ENCODE measurements at regions of chr3 and their contacts with region 1.

Region 1: DNA sequence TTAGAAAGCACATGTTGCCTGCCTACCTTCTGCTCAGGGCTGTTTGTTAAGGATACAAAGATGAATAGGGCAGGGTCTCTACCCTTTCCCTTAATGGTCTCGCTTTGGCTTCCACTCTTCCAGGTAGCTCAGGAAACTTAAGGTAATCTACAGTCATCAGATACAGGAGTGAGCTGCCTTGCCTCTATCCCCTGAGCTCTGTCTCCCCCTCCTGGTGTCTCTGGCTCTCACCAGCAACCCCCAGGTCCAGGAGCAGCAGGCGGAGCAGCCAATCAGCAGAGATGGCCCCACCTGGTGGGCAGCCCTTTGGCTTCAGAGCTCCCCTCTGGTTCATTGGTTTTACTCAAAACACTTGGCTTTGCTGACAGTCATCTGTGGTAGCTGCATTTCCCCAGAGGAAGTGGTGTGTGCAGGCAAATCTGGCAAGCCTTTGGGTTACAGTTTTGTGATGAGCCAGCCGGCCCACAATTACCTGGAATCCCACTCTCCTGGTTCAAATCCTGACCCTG is 8.5 kb upstream of the CX3CR1 start:
- DNase-seq: peak; percentile 80
- H3K4me3 Mint-ChIP-seq: no peak overlapping the region
- H3K27ac Mint-ChIP-seq: no peak overlapping the region
- H3K4me1 Mint-ChIP-seq: peaks cover 7% of the 10 kb centered on the region
- H3K27me3 Mint-ChIP-seq: no peaks in the 10 kb centered on the region
- CTCF ChIP-seq: peak; percentile 94

Region 2: GRCh38 chr3:38805765-38806386 is 482.5 kb before region 1 on chr3:
- CTCF ChIA-PET with region 1: no interaction called
- POLR2A ChIA-PET with region 1: no interaction called
- intact Hi-C with region 1: no loop called
- DNase-seq: peak; percentile 90
- H3K4me3 Mint-ChIP-seq: no peak overlapping the region
- H3K27ac Mint-ChIP-seq: no peak overlapping the region
- H3K4me1 Mint-ChIP-seq: no peaks in the 10 kb centered on the region
- H3K27me3 Mint-ChIP-seq: peaks cover 33% of the 10 kb centered on the region
- CTCF ChIP-seq: no peak

Region 3: DNA sequence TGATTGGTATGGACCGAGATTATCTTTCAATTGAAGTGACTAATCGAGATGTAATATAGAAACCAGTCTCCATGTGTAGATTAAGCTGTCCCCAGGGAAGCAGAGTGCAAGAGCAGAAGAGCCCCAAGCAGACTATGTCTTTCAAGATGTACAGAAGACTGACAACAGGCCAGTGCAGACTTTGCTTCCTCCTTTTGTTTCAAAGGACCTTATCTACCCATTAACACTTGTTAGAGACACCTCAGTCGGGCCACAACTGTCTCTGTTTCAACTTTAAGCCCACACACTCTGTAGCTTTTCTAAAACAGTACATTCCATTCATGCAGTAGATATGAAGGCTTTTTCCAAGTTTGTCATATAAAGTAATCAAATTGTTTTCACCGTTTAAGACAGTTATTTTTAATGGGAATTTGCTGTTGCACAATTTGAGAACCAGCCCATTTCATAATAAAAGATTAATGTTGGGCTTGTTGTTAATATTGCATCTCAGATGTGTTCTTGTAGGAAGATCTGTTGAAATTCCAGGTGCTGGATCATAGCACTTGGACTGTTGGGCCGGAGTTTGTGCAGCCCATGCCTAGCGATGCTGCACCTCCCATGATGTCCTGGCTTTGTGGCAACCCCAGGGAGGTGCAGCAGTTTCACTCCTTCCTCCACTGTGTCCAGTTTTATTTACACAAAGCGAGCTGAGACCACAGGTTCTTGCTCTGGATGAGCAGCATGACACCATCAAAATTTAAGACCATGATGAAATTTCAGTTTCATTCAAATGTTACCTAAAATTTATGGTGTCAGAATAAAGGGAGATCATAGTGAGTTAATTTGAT is 193.3 kb before region 1 on chr3:
- CTCF ChIA-PET with region 1: interaction called, 17 read pairs
- POLR2A ChIA-PET with region 1: no interaction called
- intact Hi-C with region 1: no loop called
- DNase-seq: no peak
- H3K4me3 Mint-ChIP-seq: no peak overlapping the region
- H3K27ac Mint-ChIP-seq: no peak overlapping the region
- H3K4me1 Mint-ChIP-seq: no peaks in the 10 kb centered on the region
- H3K27me3 Mint-ChIP-seq: no peaks in the 10 kb centered on the region
- CTCF ChIP-seq: no peak

Region 4: DNA sequence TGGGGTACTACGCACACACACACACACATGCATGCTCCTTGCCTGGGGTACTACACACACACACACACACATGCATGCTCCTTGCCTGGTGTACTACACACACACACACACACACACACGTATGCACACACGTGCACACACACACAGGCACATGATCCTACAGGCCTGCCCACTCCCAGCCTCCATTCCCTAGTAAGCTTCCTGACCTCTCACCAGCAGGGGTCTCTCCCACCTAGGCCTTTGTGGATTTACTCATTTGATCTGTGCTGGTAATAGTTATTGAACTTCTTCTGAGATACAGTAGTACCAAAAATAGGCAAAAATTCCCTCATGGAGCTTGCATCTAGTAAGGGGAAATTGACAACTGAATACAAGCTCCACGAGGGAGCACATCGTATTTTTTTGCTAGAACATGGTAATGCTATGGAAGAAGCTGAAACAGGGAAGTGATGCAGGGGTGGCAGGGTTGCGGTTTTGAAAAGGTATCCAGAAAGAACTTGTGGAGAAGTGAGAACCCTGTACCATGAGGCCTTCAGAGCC is 161.8 kb before region 1 on chr3:
- CTCF ChIA-PET with region 1: interaction called, 187 read pairs
- POLR2A ChIA-PET with region 1: interaction called, 10 read pairs
- intact Hi-C with region 1: loop called (anchors 1 kb)
- DNase-seq: peak; percentile 72
- H3K4me3 Mint-ChIP-seq: no peak overlapping the region
- H3K27ac Mint-ChIP-seq: no peak overlapping the region
- H3K4me1 Mint-ChIP-seq: peaks cover 12% of the 10 kb centered on the region
- H3K27me3 Mint-ChIP-seq: no peaks in the 10 kb centered on the region
- CTCF ChIP-seq: peak; percentile 51

Region 5: GRCh38 chr3:39180546-39181346 is 107.6 kb before region 1 on chr3:
- CTCF ChIA-PET with region 1: interaction called, 477 read pairs
- POLR2A ChIA-PET with region 1: no interaction called
- intact Hi-C with region 1: no loop called
- DNase-seq: peak; percentile 87
- H3K4me3 Mint-ChIP-seq: peak overlapping the region; percentile 73
- H3K27ac Mint-ChIP-seq: peak overlapping the region; percentile 40
- H3K4me1 Mint-ChIP-seq: peaks cover 34% of the 10 kb centered on the region
- H3K27me3 Mint-ChIP-seq: no peaks in the 10 kb centered on the region
- CTCF ChIP-seq: no peak

Region 6: GRCh38 chr3:39234705-39235104 is 53.6 kb before region 1 on chr3:
- CTCF ChIA-PET with region 1: interaction called, 11 read pairs
- POLR2A ChIA-PET with region 1: no interaction called
- intact Hi-C with region 1: no loop called
- DNase-seq: no peak
- H3K4me3 Mint-ChIP-seq: no peak overlapping the region
- H3K27ac Mint-ChIP-seq: no peak overlapping the region
- H3K4me1 Mint-ChIP-seq: no peaks in the 10 kb centered on the region
- H3K27me3 Mint-ChIP-seq: peaks cover 83% of the 10 kb centered on the region
- CTCF ChIP-seq: no peak

Region 7: GRCh38 chr3:39273119-39273518 is 15.2 kb before region 1 on chr3:
- CTCF ChIA-PET with region 1: interaction called, 70 read pairs
- POLR2A ChIA-PET with region 1: no interaction called
- intact Hi-C with region 1: no loop called
- DNase-seq: no peak
- H3K4me3 Mint-ChIP-seq: no peak overlapping the region
- H3K27ac Mint-ChIP-seq: no peak overlapping the region
- H3K4me1 Mint-ChIP-seq: no peaks in the 10 kb centered on the region
- H3K27me3 Mint-ChIP-seq: peaks cover 15% of the 10 kb centered on the region
- CTCF ChIP-seq: no peak

Region 8: DNA sequence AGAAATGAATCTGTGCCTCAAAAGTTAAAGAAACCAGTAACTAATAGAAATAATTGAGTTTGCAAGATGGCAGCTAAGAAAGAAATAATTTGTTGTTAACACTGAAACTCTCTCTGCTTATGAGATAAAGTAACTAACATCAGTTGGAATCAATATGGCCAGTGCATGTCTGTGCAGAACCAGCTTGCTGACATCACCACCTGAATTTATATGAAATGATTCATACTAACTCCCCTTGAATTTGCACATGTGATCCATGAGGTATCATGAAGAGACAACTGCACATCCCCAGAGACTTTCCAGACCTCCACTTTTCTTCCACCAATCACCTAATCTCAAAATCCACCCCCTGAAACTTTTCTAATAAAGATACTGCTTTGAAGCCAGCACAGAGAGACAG is 84.5 kb after region 1 on chr3:
- CTCF ChIA-PET with region 1: interaction called, 83 read pairs
- POLR2A ChIA-PET with region 1: no interaction called
- intact Hi-C with region 1: loop called (anchors 5 kb)
- DNase-seq: no peak
- H3K4me3 Mint-ChIP-seq: no peak overlapping the region
- H3K27ac Mint-ChIP-seq: no peak overlapping the region
- H3K4me1 Mint-ChIP-seq: peaks cover 5% of the 10 kb centered on the region
- H3K27me3 Mint-ChIP-seq: peaks cover 32% of the 10 kb centered on the region
- CTCF ChIP-seq: no peak

Measured in MCF 10A (cell line).